H1 (cell line): ENCODE measurements at regions of chr5 and their contacts with region 1.

Region 1: GRCh38 chr5:141825791-141826560 is 52.2 kb downstream of the PCDH1 start:
- DNase-seq: no peak
- H3K4me3 ChIP-seq: no peak overlapping the region
- H3K27ac ChIP-seq: no peak overlapping the region
- H3K4me1 ChIP-seq: peaks cover 10 to 26% (median 16%) of the 10 kb centered on the region in 4 experiments
- H3K27me3 ChIP-seq: no peaks in the 10 kb centered on the region
- CTCF ChIP-seq: peak; percentile 56 to 70 (median 65)
- EP300 ChIP-seq: no peak
- POLR2A ChIP-seq: no peak
- RAD21 ChIP-seq: peak; percentile 64 to 74

Region 2: GRCh38 chr5:141260458-141261237 is 565.3 kb before region 1 on chr5:
- CTCF ChIA-PET with region 1: no interaction called
- POLR2A ChIA-PET with region 1: no interaction called
- DNase-seq: no peak
- H3K4me3 ChIP-seq: no peak overlapping the region
- H3K27ac ChIP-seq: no peak overlapping the region
- H3K4me1 ChIP-seq: no peaks in the 10 kb centered on the region
- H3K27me3 ChIP-seq: no peaks in the 10 kb centered on the region
- CTCF ChIP-seq: no peak
- EP300 ChIP-seq: no peak
- POLR2A ChIP-seq: no peak
- RAD21 ChIP-seq: no peak

Region 3: DNA sequence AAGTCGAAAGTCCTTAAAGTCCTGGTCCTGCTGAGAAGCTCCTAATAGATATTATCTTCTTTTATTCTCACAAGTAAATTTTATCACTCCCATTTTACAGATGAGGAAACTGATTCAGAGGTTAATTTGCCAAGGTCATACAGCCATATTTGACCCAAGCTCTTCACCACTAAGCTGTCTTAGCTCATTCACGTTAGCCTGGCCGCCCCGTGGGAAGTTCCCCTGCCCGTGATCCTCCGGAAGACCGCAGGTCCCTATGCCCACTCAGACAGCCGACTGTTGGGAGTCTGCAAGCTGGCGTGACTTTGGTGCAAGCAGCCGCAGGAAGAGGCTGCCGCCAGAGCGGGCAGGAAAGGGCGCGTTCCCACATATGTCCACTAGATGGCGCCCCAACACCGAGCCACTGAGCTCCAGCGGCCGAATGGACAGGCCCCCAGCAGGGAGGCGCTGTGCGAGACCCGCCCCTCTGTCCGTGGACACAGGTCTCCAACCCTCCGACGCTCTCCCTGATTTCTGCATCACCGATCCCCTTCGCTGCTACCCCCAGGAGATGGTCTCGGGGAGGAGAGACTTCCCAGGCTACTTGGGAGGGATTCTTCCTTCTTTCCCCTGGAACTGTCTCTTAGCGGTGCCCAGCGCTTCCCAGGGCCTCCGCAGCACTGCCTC is 134.0 kb before region 1 on chr5:
- CTCF ChIA-PET with region 1: interaction called, 68 read pairs
- POLR2A ChIA-PET with region 1: interaction called, 6 read pairs
- DNase-seq: peak in 1 of 2 experiments; percentile 98
- H3K4me3 ChIP-seq: peak overlapping the region; percentile 19 to 60 (median 54); a peak in 7 of 8 replicates
- H3K27ac ChIP-seq: no peak overlapping the region
- H3K4me1 ChIP-seq: peaks cover 4 to 13% (median 9%) of the 10 kb centered on the region in 4 experiments
- H3K27me3 ChIP-seq: peaks cover 0 to 11% (median 2%) of the 10 kb centered on the region in 4 experiments; a peak in 2 of 7 replicates
- CTCF ChIP-seq: peak; percentile 95 to 99 (median 97)
- EP300 ChIP-seq: no peak
- POLR2A ChIP-seq: no peak
- RAD21 ChIP-seq: peak; percentile 98 to 99

Region 4: GRCh38 chr5:141729387-141730006 is 96.5 kb before region 1 on chr5:
- CTCF ChIA-PET with region 1: interaction called, 15 read pairs
- POLR2A ChIA-PET with region 1: no interaction called
- DNase-seq: no peak
- H3K4me3 ChIP-seq: no peak overlapping the region
- H3K27ac ChIP-seq: no peak overlapping the region
- H3K4me1 ChIP-seq: peaks cover 1 to 11% (median 8%) of the 10 kb centered on the region in 4 experiments; a peak in 3 of 7 replicates
- H3K27me3 ChIP-seq: no peaks in the 10 kb centered on the region
- CTCF ChIP-seq: no peak
- EP300 ChIP-seq: no peak
- POLR2A ChIP-seq: no peak
- RAD21 ChIP-seq: no peak

Region 5: GRCh38 chr5:141783005-141783941 is 42.7 kb before region 1 on chr5:
- CTCF ChIA-PET with region 1: interaction called, 23 read pairs
- POLR2A ChIA-PET with region 1: interaction called, 3 read pairs
- DNase-seq: no peak
- H3K4me3 ChIP-seq: no peak overlapping the region
- H3K27ac ChIP-seq: no peak overlapping the region
- H3K4me1 ChIP-seq: peaks cover 0 to 20% (median 7%) of the 10 kb centered on the region in 4 experiments; a peak in 6 of 7 replicates
- H3K27me3 ChIP-seq: no peaks in the 10 kb centered on the region
- CTCF ChIP-seq: no peak
- EP300 ChIP-seq: no peak
- POLR2A ChIP-seq: no peak
- RAD21 ChIP-seq: no peak

Region 6: DNA sequence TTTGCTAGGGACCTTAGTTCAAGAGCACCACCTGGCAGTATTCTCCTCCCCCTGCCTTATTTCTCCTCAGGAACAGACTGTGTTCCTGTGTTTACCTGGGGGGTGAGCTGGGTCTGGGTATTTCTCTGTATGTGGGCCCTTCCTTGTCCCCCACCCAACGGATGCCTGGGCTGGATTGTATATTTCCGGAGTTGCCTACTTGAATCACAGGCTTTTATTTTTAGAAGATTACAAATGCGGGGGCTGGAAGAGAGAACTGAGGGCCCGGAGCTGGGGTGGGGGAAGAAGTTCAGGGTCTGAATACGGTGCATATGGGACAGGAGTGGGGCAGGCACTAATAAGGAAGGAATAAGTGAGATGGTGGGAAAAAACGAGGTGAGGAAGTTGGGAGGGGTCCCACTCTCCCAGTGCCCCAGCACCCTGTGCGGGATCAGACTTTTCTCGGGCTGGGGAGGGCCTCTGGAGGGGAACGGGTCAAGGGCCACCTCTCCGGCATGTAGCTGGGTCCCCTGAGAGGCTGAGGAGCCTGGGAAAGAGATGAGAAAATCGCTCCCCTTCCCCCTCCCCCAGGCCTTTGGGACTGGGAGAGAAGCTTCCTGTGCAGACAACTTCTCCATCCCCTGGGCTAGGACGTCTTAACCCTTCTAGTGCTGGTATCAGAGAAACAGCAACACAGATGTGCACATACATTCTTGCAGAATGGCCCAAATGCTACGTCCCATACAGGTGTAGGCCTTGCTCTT is 10.1 kb after region 1 on chr5:
- CTCF ChIA-PET with region 1: interaction called, 169 read pairs
- POLR2A ChIA-PET with region 1: interaction called, 121 read pairs
- DNase-seq: no peak
- H3K4me3 ChIP-seq: no peak overlapping the region
- H3K27ac ChIP-seq: 0 out of 2 replicates have a peak overlapping the region, but pooled peaks have one; percentile 14
- H3K4me1 ChIP-seq: peaks cover 31 to 46% (median 43%) of the 10 kb centered on the region in 4 experiments
- H3K27me3 ChIP-seq: no peaks in the 10 kb centered on the region
- CTCF ChIP-seq: no peak
- EP300 ChIP-seq: no peak
- POLR2A ChIP-seq: no peak
- RAD21 ChIP-seq: no peak

Region 7: DNA sequence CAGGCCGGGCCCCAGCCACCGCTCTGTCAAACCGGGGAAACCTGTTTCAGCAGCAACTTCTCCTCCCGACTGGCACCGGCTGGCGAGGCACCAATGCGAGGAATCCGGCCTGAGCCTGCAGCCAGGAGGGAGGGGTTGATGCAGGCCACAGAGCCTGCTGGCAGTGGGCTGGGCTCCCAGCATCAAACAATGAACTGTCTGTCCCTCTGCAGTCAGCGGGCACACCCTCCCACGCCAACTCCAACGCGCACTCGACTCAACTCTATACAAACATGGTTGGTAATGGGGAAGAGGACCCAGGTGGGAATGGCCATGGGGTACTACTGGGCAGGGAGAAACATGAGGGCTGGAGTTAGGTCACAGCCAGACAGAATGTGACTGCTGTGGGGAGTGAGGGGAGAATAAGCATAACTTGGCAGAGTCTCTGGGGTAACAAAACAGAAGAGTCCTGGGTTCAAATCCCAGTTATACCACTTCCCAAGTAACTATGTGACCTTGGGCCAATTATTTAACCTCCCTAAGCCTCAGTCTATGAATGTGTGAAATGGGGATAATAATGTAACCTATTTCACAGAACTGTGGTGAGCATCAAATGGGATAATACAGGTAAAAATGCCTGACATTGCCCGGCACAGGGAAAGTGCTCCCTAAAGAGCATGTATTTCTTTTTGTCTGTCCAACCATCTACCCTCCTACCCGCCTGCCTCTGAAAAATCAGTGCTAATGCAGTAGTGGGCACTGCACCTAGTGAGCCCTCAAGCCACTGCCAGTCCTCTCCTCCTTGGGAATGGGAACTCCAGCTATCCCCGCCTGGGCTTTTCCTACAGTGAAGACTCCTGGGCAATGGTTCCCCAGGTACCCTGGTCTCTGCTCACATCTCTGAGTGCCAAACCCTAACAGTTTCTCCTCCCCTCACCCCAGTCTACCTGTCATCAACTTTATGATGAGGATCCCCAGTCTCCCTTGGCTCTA is 40.5 kb after region 1 on chr5:
- CTCF ChIA-PET with region 1: interaction called, 11 read pairs
- POLR2A ChIA-PET with region 1: interaction called, 3 read pairs
- DNase-seq: no peak
- H3K4me3 ChIP-seq: no peak overlapping the region
- H3K27ac ChIP-seq: no peak overlapping the region
- H3K4me1 ChIP-seq: peaks cover 14 to 21% (median 15%) of the 10 kb centered on the region in 4 experiments
- H3K27me3 ChIP-seq: no peaks in the 10 kb centered on the region
- CTCF ChIP-seq: no peak
- EP300 ChIP-seq: no peak
- POLR2A ChIP-seq: no peak
- RAD21 ChIP-seq: no peak

Region 8: GRCh38 chr5:141903261-141903660 is 77.3 kb after region 1 on chr5:
- CTCF ChIA-PET with region 1: no interaction called
- POLR2A ChIA-PET with region 1: no interaction called
- DNase-seq: no peak
- H3K4me3 ChIP-seq: no peak overlapping the region
- H3K27ac ChIP-seq: no peak overlapping the region
- H3K4me1 ChIP-seq: no peaks in the 10 kb centered on the region
- H3K27me3 ChIP-seq: no peaks in the 10 kb centered on the region; a peak in 1 of 7 replicates
- CTCF ChIP-seq: no peak
- EP300 ChIP-seq: no peak
- POLR2A ChIP-seq: no peak
- RAD21 ChIP-seq: no peak

Region 9: DNA sequence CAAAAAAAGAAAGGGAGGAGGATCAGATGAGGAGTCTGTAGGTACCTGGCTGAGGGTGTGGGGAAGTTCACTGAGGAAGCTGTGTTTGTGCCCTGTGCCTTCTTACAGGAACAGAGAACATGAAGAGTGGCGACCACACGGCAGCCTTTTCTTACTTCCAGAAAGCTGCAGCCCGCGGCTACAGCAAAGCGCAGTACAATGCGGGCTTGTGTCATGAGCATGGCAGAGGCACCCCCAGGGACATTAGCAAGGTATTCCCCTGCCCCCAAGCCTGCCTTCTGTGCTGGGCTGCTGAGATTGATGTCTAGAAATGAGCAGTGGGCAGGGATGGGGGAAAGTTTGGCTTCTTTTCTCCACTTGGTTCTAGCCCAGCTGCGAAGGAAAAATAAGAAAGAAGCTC is 107.2 kb after region 1 on chr5:
- CTCF ChIA-PET with region 1: no interaction called
- POLR2A ChIA-PET with region 1: no interaction called
- DNase-seq: no peak
- H3K4me3 ChIP-seq: no peak overlapping the region
- H3K27ac ChIP-seq: no peak overlapping the region
- H3K4me1 ChIP-seq: no peaks in the 10 kb centered on the region
- H3K27me3 ChIP-seq: no peaks in the 10 kb centered on the region
- CTCF ChIP-seq: no peak
- EP300 ChIP-seq: no peak
- POLR2A ChIP-seq: no peak
- RAD21 ChIP-seq: no peak